Body of pancreas (tissue), 4 donors: ENCODE measurements at regions of chr1 and their contacts with region 1.

Region 1: GRCh38 chr1:84620720-84621313 is 46.6 kb upstream of the CTBS start:
- DNase-seq: peak; percentile 71 to 77 (median 77)
- ATAC-seq: peak; percentile 93
- H3K4me3 ChIP-seq: peak overlapping the region; percentile 14 to 45
- H3K27ac ChIP-seq: peak overlapping the region in 3 of 4 donors; percentile 50 to 78 (median 57)
- H3K4me1 ChIP-seq: peaks cover 12% of the 10 kb centered on the region
- H3K27me3 ChIP-seq: no peaks in the 10 kb centered on the region
- CTCF ChIP-seq: peak; percentile 80 to 99 (median 97)
- POLR2A ChIP-seq: peak; percentile 23 to 38 (median 27)

Region 2: DNA sequence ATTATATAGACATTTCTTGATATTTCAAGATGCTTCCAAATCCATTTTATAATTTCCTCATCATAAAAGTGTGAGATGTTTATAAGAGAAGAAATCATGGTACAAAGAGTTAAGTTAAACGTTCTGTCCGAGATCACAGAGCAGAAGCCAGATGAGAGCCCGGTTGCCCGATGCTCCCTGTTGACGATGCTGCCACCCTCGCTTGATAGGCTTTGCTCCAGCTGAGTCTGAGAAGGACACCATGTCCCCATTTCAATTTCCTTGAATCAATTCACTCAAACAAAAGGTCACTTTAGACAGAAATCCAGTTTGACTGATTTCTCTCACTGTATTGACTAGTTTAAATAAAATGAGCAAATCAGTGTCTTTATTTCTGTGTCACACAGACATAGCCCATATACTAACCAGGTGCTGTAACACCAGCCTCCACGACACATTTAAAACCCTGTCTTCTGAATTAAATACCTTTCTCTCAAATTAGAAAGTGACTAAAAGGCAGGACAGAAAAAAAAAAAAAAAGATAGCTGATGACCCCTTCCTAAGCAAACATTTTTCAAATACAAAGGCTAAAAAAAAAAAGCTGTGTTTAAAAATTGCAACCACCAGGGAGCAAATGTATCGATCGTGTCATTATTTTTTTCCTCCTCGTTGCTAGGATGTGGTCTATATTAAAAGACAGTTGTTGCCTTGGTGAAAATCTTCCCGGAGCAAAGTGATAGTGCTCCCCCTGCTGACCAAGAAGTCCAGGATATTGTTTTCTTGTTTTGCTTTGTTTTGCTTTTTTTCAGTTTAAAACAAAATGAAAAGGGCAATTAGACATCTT is 187.3 kb before region 1 on chr1:
- intact Hi-C with region 1: loop called (anchors 10 kb)
- DNase-seq: peak; percentile 55 to 79 (median 64)
- ATAC-seq: peak; percentile 92
- H3K4me3 ChIP-seq: no peak overlapping the region
- H3K27ac ChIP-seq: peak overlapping the region in 1 of 4 donors; percentile 30
- H3K4me1 ChIP-seq: peaks cover 3% of the 10 kb centered on the region
- H3K27me3 ChIP-seq: no peaks in the 10 kb centered on the region
- CTCF ChIP-seq: peak; percentile 53 to 91 (median 89)
- POLR2A ChIP-seq: no peak

Region 3: GRCh38 chr1:84675105-84675504 is 54.3 kb after region 1 on chr1:
- intact Hi-C with region 1: no loop called
- DNase-seq: no peak
- ATAC-seq: no peak
- H3K4me3 ChIP-seq: no peak overlapping the region
- H3K27ac ChIP-seq: no peak overlapping the region
- H3K4me1 ChIP-seq: peaks cover 6% of the 10 kb centered on the region
- H3K27me3 ChIP-seq: no peaks in the 10 kb centered on the region
- CTCF ChIP-seq: no peak
- POLR2A ChIP-seq: no peak

Region 4: DNA sequence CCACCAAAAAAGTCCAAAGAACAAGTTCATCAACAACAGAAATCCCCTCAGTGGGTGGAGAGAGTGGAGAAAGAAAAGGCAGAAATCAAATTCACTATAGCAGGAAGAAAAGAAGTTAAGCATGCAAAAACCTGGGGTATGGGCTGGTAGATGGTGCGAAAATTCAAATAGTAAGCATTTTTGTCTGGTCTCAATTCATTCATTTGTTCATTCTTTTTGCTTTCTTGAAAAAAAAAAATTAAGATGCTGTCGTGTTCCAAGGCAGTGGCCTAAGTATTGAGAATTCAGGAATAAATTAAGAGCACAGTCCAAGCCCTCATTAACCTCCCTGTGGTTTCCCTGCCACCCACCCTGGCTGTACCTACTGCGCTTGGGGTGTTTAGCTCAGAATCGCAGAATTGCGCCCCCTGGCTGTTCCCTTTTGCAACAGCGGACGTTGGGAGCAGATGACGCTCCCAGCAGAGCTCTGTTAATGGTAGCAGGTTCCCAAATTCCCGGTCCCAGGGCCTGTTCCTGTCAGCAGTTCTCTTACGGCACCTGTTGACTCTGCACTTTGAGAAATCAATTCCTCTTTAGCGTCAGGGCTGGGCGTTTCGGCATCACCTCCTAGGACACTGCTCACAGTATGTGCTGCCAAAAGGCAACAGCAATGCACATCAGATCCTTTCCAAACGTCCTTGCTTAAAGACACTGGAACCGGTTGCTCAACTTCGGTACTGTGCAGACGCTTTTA is 103.5 kb after region 1 on chr1:
- intact Hi-C with region 1: no loop called
- DNase-seq: peak in 2 of 4 donors; percentile 15 to 19
- ATAC-seq: no peak
- H3K4me3 ChIP-seq: no peak overlapping the region
- H3K27ac ChIP-seq: no peak overlapping the region
- H3K4me1 ChIP-seq: peaks cover 19% of the 10 kb centered on the region
- H3K27me3 ChIP-seq: no peaks in the 10 kb centered on the region
- CTCF ChIP-seq: peak in 3 of 7 experiments; percentile 18 to 21 (median 20)
- POLR2A ChIP-seq: no peak